Endothelial cell of umbilical vein (primary cell): ENCODE measurements at regions of chr20 and their contacts with region 1.

Region 1: GRCh38 chr20:44837946-44838345 is 27.6 kb upstream of the RIMS4 start:
- DNase-seq: no peak
- H3K4me3 ChIP-seq: no peak overlapping the region
- H3K27ac ChIP-seq: no peak overlapping the region
- H3K4me1 ChIP-seq: no peaks in the 10 kb centered on the region
- H3K27me3 ChIP-seq: peaks cover 2 to 3% of the 10 kb centered on the region in 2 experiments
- CTCF ChIP-seq: no peak
- POLR2A ChIP-seq: no peak

Region 2: GRCh38 chr20:44756011-44756688 is 81.8 kb before region 1 on chr20:
- CTCF ChIA-PET with region 1: interaction called, 3 read pairs
- POLR2A ChIA-PET with region 1: no interaction called
- dilution Hi-C with region 1: loop called (anchors 5 kb)
- intact Hi-C with region 1: no loop called
- DNase-seq: no peak
- H3K4me3 ChIP-seq: no peak overlapping the region
- H3K27ac ChIP-seq: no peak overlapping the region
- H3K4me1 ChIP-seq: no peaks in the 10 kb centered on the region
- H3K27me3 ChIP-seq: peaks cover 6 to 8% of the 10 kb centered on the region in 2 experiments
- CTCF ChIP-seq: no peak
- POLR2A ChIP-seq: no peak

Region 3: GRCh38 chr20:44819936-44820335 is 18.0 kb before region 1 on chr20:
- CTCF ChIA-PET with region 1: no interaction called
- POLR2A ChIA-PET with region 1: no interaction called
- dilution Hi-C with region 1: no loop called
- intact Hi-C with region 1: no loop called
- DNase-seq: no peak
- H3K4me3 ChIP-seq: no peak overlapping the region
- H3K27ac ChIP-seq: no peak overlapping the region
- H3K4me1 ChIP-seq: no peaks in the 10 kb centered on the region
- H3K27me3 ChIP-seq: peaks cover 3 to 8% of the 10 kb centered on the region in 2 experiments
- CTCF ChIP-seq: no peak
- POLR2A ChIP-seq: no peak